ENCODE measurements at regions of chr5 and their contacts with region 1.

Region 1: GRCh38 chr5:16797951-16798350 is 138.1 kb downstream of the MYO10 start:
- DNase-seq: no peak
- ATAC-seq: no peak
- H3K4me3 ChIP-seq: no peak overlapping the region
- H3K27ac ChIP-seq: no peak overlapping the region
- H3K4me1 ChIP-seq: peaks cover 0 to 3% (median 0%) of the 10 kb centered on the region in 9 donors
- H3K27me3 ChIP-seq: no peaks in the 10 kb centered on the region
- CTCF ChIP-seq: no peak

Region 2: DNA sequence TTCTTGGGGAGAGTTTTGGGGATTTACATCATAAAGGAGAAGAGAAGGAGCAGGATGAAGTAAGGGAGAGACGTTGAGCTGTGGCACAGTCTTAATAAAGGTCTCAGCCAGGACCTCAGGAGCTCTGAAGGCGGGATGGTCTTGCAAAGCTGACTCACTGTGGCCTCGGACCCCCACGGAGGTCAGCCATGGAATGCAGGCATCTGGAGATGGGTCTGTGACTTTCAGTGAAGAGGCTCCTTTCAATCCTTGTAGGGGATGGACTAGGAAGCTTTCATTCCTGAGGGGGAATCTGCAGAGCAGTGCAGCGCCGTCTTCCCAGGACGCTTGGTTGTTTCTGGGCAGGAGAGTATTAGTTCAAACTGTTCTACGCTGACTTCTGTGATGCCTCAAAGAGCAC is 353.7 kb after region 1 on chr5:
- intact Hi-C with region 1: no loop called
- DNase-seq: no peak
- ATAC-seq: no peak
- H3K4me3 ChIP-seq: no peak overlapping the region
- H3K27ac ChIP-seq: no peak overlapping the region
- H3K4me1 ChIP-seq: no peaks in the 10 kb centered on the region
- H3K27me3 ChIP-seq: peaks cover 0 to 3% (median 0%) of the 10 kb centered on the region in 7 donors
- CTCF ChIP-seq: no peak

Region 3: DNA sequence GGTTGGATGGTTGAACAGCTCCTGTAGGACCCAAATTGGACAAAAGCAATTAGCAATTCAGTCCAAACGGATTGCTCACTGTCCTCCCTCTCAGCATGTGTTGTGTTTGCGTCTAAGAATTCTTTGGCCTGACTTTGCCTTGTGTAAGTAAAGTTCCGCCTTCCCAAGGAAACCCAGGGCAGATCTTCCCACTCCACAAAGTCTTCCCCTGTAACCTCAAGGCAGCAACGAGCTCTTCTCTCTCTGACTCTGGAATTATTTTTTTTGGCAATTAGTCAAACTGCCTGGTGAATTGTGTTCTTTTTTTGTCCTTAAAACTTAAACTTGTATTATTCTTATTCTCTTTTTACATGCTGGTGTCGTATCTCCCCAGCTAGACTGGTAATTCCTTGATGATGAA is 398.7 kb after region 1 on chr5:
- intact Hi-C with region 1: loop called in 1 of 10 experiments (anchors 5 kb)
- DNase-seq: no peak
- ATAC-seq: no peak
- H3K4me3 ChIP-seq: no peak overlapping the region
- H3K27ac ChIP-seq: no peak overlapping the region
- H3K4me1 ChIP-seq: no peaks in the 10 kb centered on the region
- H3K27me3 ChIP-seq: peaks cover 0 to 17% (median 4%) of the 10 kb centered on the region in 7 donors
- CTCF ChIP-seq: no peak

Measured in heart right ventricle (tissue), 16 donors.